ENCODE measurements at regions of chrX and their contacts with region 1.

Region 1: GRCh38 chrX:154411322-154411980 is at the start of gene TAFAZZIN:
- DNase-seq: peak; percentile 51 to 81 (median 66)
- ATAC-seq: peak; percentile 71 to 77
- H3K4me3 Mint-ChIP-seq: peak within 1 kb of the TSS; percentile 85 to 94 (median 90)
- H3K27ac Mint-ChIP-seq: peak within 1 kb of the TSS; percentile 87 to 97 (median 96)
- H3K4me1 Mint-ChIP-seq: peaks cover 12 to 22% (median 16%) of the 10 kb centered on the region in 4 donors
- H3K27me3 Mint-ChIP-seq: no peaks in the 10 kb centered on the region
- polyA plus RNA-seq, gene TAFAZZIN: 29.3 to 39.8 (median 37.8) TPM

Region 2: DNA sequence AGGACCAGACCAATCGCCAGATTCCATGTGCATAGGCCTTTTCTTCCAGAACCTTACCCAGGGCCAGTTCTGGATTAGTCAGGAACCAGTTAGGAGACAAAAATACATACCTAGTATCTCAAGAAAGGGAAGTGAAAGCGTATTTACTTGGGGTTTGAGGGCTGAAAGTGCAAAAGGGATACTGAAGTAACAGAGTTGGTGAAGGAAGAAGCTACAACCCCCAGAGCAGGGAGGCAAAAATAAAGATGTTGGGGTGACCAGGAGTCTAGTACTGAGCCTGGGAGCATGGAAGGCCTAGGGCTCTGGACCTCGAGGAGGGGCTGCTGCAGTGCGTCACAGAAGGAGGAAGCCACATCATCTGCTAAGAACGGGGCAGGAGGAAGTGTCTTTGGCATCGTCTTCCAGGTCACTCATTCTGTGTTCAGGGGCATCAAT is 77.6 kb before region 1 on chrX:
- POLR2A ChIA-PET with region 1: no interaction called
- DNase-seq: no peak
- ATAC-seq: peak in 1 of 2 donors; percentile 12
- H3K4me3 Mint-ChIP-seq: peak overlapping the region in 6 of 10 donors; percentile 8 to 42 (median 26)
- H3K27ac Mint-ChIP-seq: peak overlapping the region in 8 of 10 donors; percentile 11 to 91 (median 52)
- H3K4me1 Mint-ChIP-seq: peaks cover 7 to 40% (median 29%) of the 10 kb centered on the region in 4 donors
- H3K27me3 Mint-ChIP-seq: no peaks in the 10 kb centered on the region

Region 3: GRCh38 chrX:154348114-154348531 is 63.3 kb before region 1 on chrX:
- POLR2A ChIA-PET with region 1: no interaction called
- DNase-seq: no peak
- ATAC-seq: no peak
- H3K4me3 Mint-ChIP-seq: peak overlapping the region in 6 of 10 donors; percentile 18 to 51 (median 23)
- H3K27ac Mint-ChIP-seq: peak overlapping the region; percentile 46 to 97 (median 92)
- H3K4me1 Mint-ChIP-seq: peaks cover 6 to 50% (median 43%) of the 10 kb centered on the region in 4 donors
- H3K27me3 Mint-ChIP-seq: no peaks in the 10 kb centered on the region

Region 4: GRCh38 chrX:154428176-154429010 is 16.9 kb after region 1 on chrX and contains the start of gene ATP6AP1:
- POLR2A ChIA-PET with region 1: interaction called, 23 read pairs
- DNase-seq: peak; percentile 73 to 92 (median 84)
- ATAC-seq: peak; percentile 97 to 98
- H3K4me3 Mint-ChIP-seq: peak within 1 kb of the TSS; percentile 73 to 89 (median 82)
- H3K27ac Mint-ChIP-seq: peak within 1 kb of the TSS; percentile 76 to 92 (median 88)
- H3K4me1 Mint-ChIP-seq: peaks cover 10 to 34% (median 27%) of the 10 kb centered on the region in 4 donors
- H3K27me3 Mint-ChIP-seq: no peaks in the 10 kb centered on the region
- polyA plus RNA-seq, gene ATP6AP1: 84.7 to 111 (median 90.2) TPM

Region 5: DNA sequence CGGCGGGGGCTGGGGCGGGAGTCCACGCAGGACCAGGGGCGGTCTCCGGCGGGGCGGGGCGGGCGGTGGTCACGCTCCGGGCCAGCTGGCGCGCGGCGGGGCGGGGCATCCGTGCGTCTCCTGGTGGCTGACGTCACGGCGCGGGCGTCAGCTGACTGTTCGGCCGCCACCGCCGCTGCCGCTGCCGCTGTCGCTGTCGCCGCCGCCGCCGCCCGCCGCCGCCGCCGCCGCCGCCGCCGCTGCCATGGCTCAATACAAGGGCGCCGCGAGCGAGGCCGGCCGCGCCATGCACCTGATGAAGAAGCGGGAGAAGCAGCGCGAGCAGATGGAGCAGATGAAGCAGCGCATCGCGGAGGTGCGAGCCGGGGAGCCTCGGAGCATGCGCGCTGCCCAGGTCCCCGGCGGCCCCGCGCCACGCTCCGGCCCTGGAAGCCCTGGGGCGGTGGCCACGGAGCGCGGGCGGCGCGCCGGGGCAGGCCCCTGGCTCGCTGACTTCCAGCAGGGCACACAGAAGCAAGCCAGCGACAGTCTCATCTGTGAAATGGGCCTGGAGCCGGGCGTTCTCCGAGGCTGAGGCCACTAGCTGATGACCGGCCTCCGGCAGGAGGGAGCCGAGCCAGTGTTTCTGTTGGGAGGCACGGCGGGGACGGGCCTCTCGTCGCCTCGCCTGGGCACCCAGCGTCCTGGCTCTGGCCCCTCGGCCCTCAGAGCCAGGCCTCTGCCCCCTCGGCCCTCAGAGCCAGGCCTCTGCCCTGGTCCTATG is 32.7 kb after region 1 on chrX and contains the start of gene FAM50A:
- POLR2A ChIA-PET with region 1: interaction called, 11 read pairs
- DNase-seq: peak; percentile 50 to 78 (median 60)
- ATAC-seq: peak; percentile 81 to 83
- H3K4me3 Mint-ChIP-seq: peak within 1 kb of the TSS; percentile 54 to 85 (median 77)
- H3K27ac Mint-ChIP-seq: peak within 1 kb of the TSS; percentile 45 to 95 (median 79)
- H3K4me1 Mint-ChIP-seq: peaks cover 1 to 31% (median 15%) of the 10 kb centered on the region in 4 donors
- H3K27me3 Mint-ChIP-seq: no peaks in the 10 kb centered on the region
- polyA plus RNA-seq, gene FAM50A: 25.1 to 45.6 (median 40.4) TPM

Measured in naive thymus-derived CD8-positive, alpha-beta T cell (primary cell).